Activated CD4-positive, alpha-beta T cell treated with anti-CD3 and anti-CD28 coated beads, Interleukin-2, amount 10 ng/mL, durations not matched to agents 7 days and 5 days (primary cell): ENCODE measurements at regions of chr14 and their contacts with region 1.

Region 1: GRCh38 chr14:54773171-54773975 is 129.3 kb downstream of the GCH1 start:
- DNase-seq: peak; percentile 86
- H3K4me3 Mint-ChIP-seq: peak overlapping the region; percentile 18
- H3K27ac Mint-ChIP-seq: peak overlapping the region; percentile 78
- H3K4me1 Mint-ChIP-seq: peaks cover 57% of the 10 kb centered on the region
- H3K27me3 Mint-ChIP-seq: peaks cover 4% of the 10 kb centered on the region

Region 2: GRCh38 chr14:54509546-54510501 is 263.5 kb before region 1 on chr14 and contains the start of gene CGRRF1:
- CTCF ChIA-PET with region 1: interaction called, 13 read pairs
- POLR2A ChIA-PET with region 1: no interaction called
- DNase-seq: peak; percentile 95
- H3K4me3 Mint-ChIP-seq: peak within 1 kb of the TSS; percentile 92
- H3K27ac Mint-ChIP-seq: peak within 1 kb of the TSS; percentile 89
- H3K4me1 Mint-ChIP-seq: peaks cover 33% of the 10 kb centered on the region
- H3K27me3 Mint-ChIP-seq: peaks cover 7% of the 10 kb centered on the region
- total RNA-seq, gene CGRRF1: 9.6 to 9.7 TPM

Region 3: GRCh38 chr14:54566410-54567223 is 206.8 kb before region 1 on chr14 and contains the start of gene SAMD4A:
- CTCF ChIA-PET with region 1: interaction called, 110 read pairs
- POLR2A ChIA-PET with region 1: no interaction called
- DNase-seq: peak; percentile 54
- H3K4me3 Mint-ChIP-seq: peak within 1 kb of the TSS; percentile 84
- H3K27ac Mint-ChIP-seq: peak within 1 kb of the TSS; percentile 85
- H3K4me1 Mint-ChIP-seq: peaks cover 18% of the 10 kb centered on the region
- H3K27me3 Mint-ChIP-seq: peaks cover 47% of the 10 kb centered on the region
- total RNA-seq, gene SAMD4A: 0.54 to 0.62 TPM

Region 4: GRCh38 chr14:54669721-54670561 is 103.4 kb before region 1 on chr14:
- CTCF ChIA-PET with region 1: interaction called, 24 read pairs
- POLR2A ChIA-PET with region 1: no interaction called
- DNase-seq: peak; percentile 20
- H3K4me3 Mint-ChIP-seq: no peak overlapping the region
- H3K27ac Mint-ChIP-seq: peak overlapping the region; percentile 21
- H3K4me1 Mint-ChIP-seq: peaks cover 39% of the 10 kb centered on the region
- H3K27me3 Mint-ChIP-seq: peaks cover 17% of the 10 kb centered on the region

Region 5: GRCh38 chr14:54730156-54730961 is 43.0 kb before region 1 on chr14:
- CTCF ChIA-PET with region 1: interaction called, 19 read pairs
- POLR2A ChIA-PET with region 1: no interaction called
- DNase-seq: peak; percentile 53
- H3K4me3 Mint-ChIP-seq: peak overlapping the region; percentile 39
- H3K27ac Mint-ChIP-seq: peak overlapping the region; percentile 79
- H3K4me1 Mint-ChIP-seq: peaks cover 38% of the 10 kb centered on the region
- H3K27me3 Mint-ChIP-seq: peaks cover 12% of the 10 kb centered on the region

Region 6: GRCh38 chr14:54742492-54743350 is 30.7 kb before region 1 on chr14:
- CTCF ChIA-PET with region 1: interaction called, 10 read pairs
- POLR2A ChIA-PET with region 1: no interaction called
- DNase-seq: no peak
- H3K4me3 Mint-ChIP-seq: peak overlapping the region; percentile 1
- H3K27ac Mint-ChIP-seq: peak overlapping the region; percentile 82
- H3K4me1 Mint-ChIP-seq: peaks cover 56% of the 10 kb centered on the region
- H3K27me3 Mint-ChIP-seq: peaks cover 11% of the 10 kb centered on the region

Region 7: GRCh38 chr14:54792288-54792687 is 18.9 kb after region 1 on chr14:
- CTCF ChIA-PET with region 1: interaction called, 16 read pairs
- POLR2A ChIA-PET with region 1: no interaction called
- DNase-seq: no peak
- H3K4me3 Mint-ChIP-seq: no peak overlapping the region
- H3K27ac Mint-ChIP-seq: no peak overlapping the region
- H3K4me1 Mint-ChIP-seq: peaks cover 3% of the 10 kb centered on the region
- H3K27me3 Mint-ChIP-seq: peaks cover 2% of the 10 kb centered on the region

Region 8: GRCh38 chr14:54866588-54866987 is 93.2 kb after region 1 on chr14:
- CTCF ChIA-PET with region 1: no interaction called
- POLR2A ChIA-PET with region 1: no interaction called
- DNase-seq: no peak
- H3K4me3 Mint-ChIP-seq: no peak overlapping the region
- H3K27ac Mint-ChIP-seq: no peak overlapping the region
- H3K4me1 Mint-ChIP-seq: peaks cover 36% of the 10 kb centered on the region
- H3K27me3 Mint-ChIP-seq: no peaks in the 10 kb centered on the region

Region 9: DNA sequence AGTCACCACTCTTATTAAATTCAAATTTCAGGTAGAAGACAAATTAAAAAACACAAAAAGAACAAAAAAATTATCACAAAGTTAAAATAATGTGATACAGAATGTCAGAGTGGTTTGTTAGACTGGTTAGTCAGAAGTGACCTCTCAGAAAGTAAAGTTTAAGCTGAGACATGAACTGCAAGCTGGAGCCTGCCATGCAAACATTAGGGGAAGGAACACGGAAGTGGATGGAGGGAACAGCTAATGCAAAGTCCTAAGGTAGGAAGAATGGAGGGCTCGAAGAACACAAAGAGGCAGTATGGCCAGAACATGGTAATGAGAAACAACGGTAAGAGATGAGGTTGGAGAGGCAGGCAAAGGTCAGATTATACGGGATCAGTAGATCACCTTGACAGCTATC is 211.8 kb after region 1 on chr14:
- CTCF ChIA-PET with region 1: no interaction called
- POLR2A ChIA-PET with region 1: no interaction called
- DNase-seq: no peak
- H3K4me3 Mint-ChIP-seq: no peak overlapping the region
- H3K27ac Mint-ChIP-seq: no peak overlapping the region
- H3K4me1 Mint-ChIP-seq: no peaks in the 10 kb centered on the region
- H3K27me3 Mint-ChIP-seq: no peaks in the 10 kb centered on the region